K562 (cell line): ENCODE measurements at regions of chr1 and their contacts with region 1.

Region 1: GRCh38 chr1:211323156-211324063 is 3.2 kb upstream of the TRAF5 start:
- DNase-seq: peak; percentile 42 to 85 (median 62)
- ATAC-seq: peak; percentile 79
- H3K4me3 ChIP-seq: no peak overlapping the region
- H3K27ac ChIP-seq: no peak overlapping the region
- H3K4me1 ChIP-seq: peaks cover 17 to 24% of the 10 kb centered on the region in 2 experiments
- H3K27me3 ChIP-seq: no peaks in the 10 kb centered on the region
- CTCF ChIP-seq: peak; percentile 91 to 95 (median 91)
- EP300 ChIP-seq: no peak
- POLR2A ChIP-seq: no peak
- RAD21 ChIP-seq: peak; percentile 92 to 95

Region 2: DNA sequence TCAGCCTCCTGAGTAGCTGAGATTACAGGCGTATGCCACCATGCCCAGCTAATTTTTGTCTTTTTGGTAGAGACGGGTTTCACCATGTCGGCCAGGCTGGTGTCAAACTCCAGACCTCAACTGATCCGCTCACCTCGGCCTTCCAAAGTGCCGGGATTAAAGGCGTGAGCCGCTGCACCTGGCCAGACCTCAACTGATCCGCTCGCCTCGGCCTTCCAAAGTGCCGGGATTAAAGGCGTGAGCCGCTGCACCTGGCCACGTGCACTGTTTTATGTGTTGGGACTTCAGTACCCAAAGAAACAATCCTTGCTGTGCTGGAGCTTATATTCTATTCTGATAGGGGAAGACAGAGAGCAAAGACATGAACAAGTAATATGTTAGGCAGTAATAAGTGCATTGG is 13.4 kb after region 1 on chr1:
- CTCF ChIA-PET with region 1: no interaction called
- POLR2A ChIA-PET with region 1: interaction called, 15 read pairs
- in situ Hi-C with region 1: no loop called
- intact Hi-C with region 1: no loop called
- DNase-seq: no peak
- ATAC-seq: no peak
- H3K4me3 ChIP-seq: no peak overlapping the region
- H3K27ac ChIP-seq: no peak overlapping the region
- H3K4me1 ChIP-seq: peaks cover 9 to 22% of the 10 kb centered on the region in 2 experiments; a peak in 4 of 5 replicates
- H3K27me3 ChIP-seq: no peaks in the 10 kb centered on the region
- CTCF ChIP-seq: no peak
- EP300 ChIP-seq: no peak
- POLR2A ChIP-seq: no peak
- RAD21 ChIP-seq: no peak

Region 3: DNA sequence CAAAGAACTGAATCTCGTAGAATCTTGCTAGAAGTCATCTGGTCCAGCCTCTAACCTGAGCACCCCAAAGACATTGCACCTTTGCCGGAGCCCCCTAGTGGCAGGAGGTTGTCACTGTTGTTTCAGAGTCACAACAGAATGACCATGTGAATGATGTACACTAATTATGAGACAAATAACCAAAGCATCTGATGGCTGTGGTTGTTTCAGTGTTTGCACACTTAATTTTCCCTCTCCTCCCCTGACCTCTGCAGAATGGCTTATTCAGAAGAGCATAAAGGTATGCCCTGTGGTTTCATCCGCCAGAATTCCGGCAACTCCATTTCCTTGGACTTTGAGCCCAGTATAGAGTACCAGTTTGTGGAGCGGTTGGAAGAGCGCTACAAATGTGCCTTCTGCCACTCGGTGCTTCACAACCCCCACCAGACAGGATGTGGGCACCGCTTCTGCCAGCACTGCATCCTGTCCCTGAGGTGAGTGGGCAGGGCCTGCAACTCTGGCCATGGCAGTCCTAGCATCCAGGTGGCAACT is 29.6 kb after region 1 on chr1:
- CTCF ChIA-PET with region 1: interaction called, 3 read pairs
- POLR2A ChIA-PET with region 1: interaction called, 3 read pairs
- in situ Hi-C with region 1: no loop called
- intact Hi-C with region 1: loop called (anchors 2 kb)
- DNase-seq: peak; percentile 68 to 80 (median 74)
- ATAC-seq: peak; percentile 90
- H3K4me3 ChIP-seq: no peak overlapping the region
- H3K27ac ChIP-seq: no peak overlapping the region
- H3K4me1 ChIP-seq: no peaks in the 10 kb centered on the region; a peak in 2 of 5 replicates
- H3K27me3 ChIP-seq: no peaks in the 10 kb centered on the region
- CTCF ChIP-seq: peak; percentile 77 to 85 (median 80)
- EP300 ChIP-seq: no peak
- POLR2A ChIP-seq: no peak
- RAD21 ChIP-seq: peak in 1 of 2 experiments; percentile 68; a peak in 2 of 4 replicates

Region 4: GRCh38 chr1:211382714-211383480 is 59.5 kb after region 1 on chr1:
- CTCF ChIA-PET with region 1: no interaction called
- POLR2A ChIA-PET with region 1: interaction called, 3 read pairs
- in situ Hi-C with region 1: no loop called
- intact Hi-C with region 1: loop called (anchors 2 kb)
- DNase-seq: peak; percentile 94 to 99 (median 96)
- ATAC-seq: peak; percentile 98
- H3K4me3 ChIP-seq: peak overlapping the region; percentile 60
- H3K27ac ChIP-seq: peak overlapping the region; percentile 93
- H3K4me1 ChIP-seq: peaks cover 9 to 11% of the 10 kb centered on the region in 2 experiments; a peak in 4 of 5 replicates
- H3K27me3 ChIP-seq: no peaks in the 10 kb centered on the region
- CTCF ChIP-seq: no peak
- EP300 ChIP-seq: peak; percentile 42; the same call in 1 of the 2 replicates
- POLR2A ChIP-seq: peak; percentile 99
- RAD21 ChIP-seq: no peak

Region 5: DNA sequence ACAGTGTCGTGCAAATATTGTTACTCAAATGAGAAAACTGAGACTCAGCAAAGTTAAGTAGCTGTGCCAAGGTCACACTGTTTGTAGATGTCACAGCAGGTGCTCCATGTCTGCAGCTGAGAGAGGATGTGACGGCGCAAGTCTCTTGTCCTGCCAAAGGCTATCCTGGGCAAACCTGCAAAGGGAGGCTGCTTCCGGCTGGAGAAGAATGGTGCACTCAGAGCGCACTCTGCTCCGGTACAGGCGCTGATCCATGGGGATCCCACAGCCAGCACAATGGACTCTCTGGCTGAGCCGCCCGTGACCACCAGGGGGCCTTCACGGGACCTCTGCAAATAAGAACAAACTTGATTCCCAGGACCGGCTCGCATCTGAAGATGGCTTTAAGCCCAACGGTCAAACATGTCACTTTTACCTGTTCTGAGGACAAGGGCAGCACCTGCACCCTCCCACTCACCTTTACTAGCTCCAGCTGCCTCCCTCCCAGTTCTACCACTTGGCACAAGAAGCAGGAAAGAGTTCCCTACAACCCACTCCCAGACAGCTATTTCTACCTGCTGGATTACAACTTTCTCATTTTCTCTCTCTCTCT is 146.6 kb after region 1 on chr1:
- CTCF ChIA-PET with region 1: interaction called, 5 read pairs
- POLR2A ChIA-PET with region 1: interaction called, 3 read pairs
- in situ Hi-C with region 1: loop called (anchors 5 kb)
- intact Hi-C with region 1: loop called (anchors 1 kb)
- DNase-seq: peak; percentile 75 to 88 (median 78)
- ATAC-seq: peak; percentile 99
- H3K4me3 ChIP-seq: no peak overlapping the region
- H3K27ac ChIP-seq: no peak overlapping the region
- H3K4me1 ChIP-seq: peaks cover 0 to 5% of the 10 kb centered on the region in 2 experiments; a peak in 2 of 5 replicates
- H3K27me3 ChIP-seq: no peaks in the 10 kb centered on the region; a peak in 1 of 5 replicates
- CTCF ChIP-seq: peak; percentile 89 to 97 (median 92)
- EP300 ChIP-seq: no peak
- POLR2A ChIP-seq: no peak
- RAD21 ChIP-seq: peak; percentile 44 to 80; a peak in 3 of 4 replicates

Region 6: GRCh38 chr1:211476200-211476849 is 152.9 kb after region 1 on chr1:
- CTCF ChIA-PET with region 1: interaction called, 12 read pairs
- POLR2A ChIA-PET with region 1: interaction called, 3 read pairs
- in situ Hi-C with region 1: loop called (anchors 5 kb)
- intact Hi-C with region 1: loop called (anchors 1 kb)
- DNase-seq: peak; percentile 77 to 87 (median 80)
- ATAC-seq: peak; percentile 91
- H3K4me3 ChIP-seq: no peak overlapping the region
- H3K27ac ChIP-seq: no peak overlapping the region
- H3K4me1 ChIP-seq: peaks cover 5 to 11% of the 10 kb centered on the region in 2 experiments; a peak in 3 of 5 replicates
- H3K27me3 ChIP-seq: peaks cover 29 to 36% of the 10 kb centered on the region in 2 experiments
- CTCF ChIP-seq: peak; percentile 89 to 92 (median 90)
- EP300 ChIP-seq: no peak
- POLR2A ChIP-seq: no peak
- RAD21 ChIP-seq: peak; percentile 78 to 81